IMR-90 (cell line): ENCODE measurements at regions of chr2 and their contacts with region 1.

Region 1: DNA sequence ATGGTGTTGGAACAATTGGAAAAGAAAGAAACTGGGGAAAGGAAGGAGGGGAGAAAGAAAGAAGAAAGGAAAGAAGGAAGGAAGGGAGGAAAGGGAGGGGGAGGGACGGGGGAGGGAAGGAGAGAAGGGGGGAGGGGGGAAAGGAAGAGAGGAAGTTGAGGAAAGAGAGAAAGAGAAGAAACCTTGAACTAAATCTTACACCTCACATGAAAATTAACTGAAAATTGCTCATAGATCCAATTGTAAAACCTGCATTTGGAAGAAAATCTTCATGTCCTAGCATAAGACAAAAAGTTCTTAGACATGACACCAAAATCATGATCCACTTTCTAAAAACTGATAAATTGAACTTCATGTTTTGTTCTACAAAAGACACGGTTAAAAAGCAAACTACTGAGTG is 163.8 kb downstream of the EXOC6B start:
- DNase-seq: no peak
- ATAC-seq: no peak
- H3K4me3 ChIP-seq: no peak overlapping the region
- H3K27ac ChIP-seq: no peak overlapping the region
- H3K4me1 ChIP-seq: 0 out of 2 replicates have a peak, but pooled peaks cover 1% of the 10 kb centered on the region
- H3K27me3 ChIP-seq: no peaks in the 10 kb centered on the region
- CTCF ChIP-seq: no peak
- POLR2A ChIP-seq: no peak
- RAD21 ChIP-seq: no peak

Region 2: DNA sequence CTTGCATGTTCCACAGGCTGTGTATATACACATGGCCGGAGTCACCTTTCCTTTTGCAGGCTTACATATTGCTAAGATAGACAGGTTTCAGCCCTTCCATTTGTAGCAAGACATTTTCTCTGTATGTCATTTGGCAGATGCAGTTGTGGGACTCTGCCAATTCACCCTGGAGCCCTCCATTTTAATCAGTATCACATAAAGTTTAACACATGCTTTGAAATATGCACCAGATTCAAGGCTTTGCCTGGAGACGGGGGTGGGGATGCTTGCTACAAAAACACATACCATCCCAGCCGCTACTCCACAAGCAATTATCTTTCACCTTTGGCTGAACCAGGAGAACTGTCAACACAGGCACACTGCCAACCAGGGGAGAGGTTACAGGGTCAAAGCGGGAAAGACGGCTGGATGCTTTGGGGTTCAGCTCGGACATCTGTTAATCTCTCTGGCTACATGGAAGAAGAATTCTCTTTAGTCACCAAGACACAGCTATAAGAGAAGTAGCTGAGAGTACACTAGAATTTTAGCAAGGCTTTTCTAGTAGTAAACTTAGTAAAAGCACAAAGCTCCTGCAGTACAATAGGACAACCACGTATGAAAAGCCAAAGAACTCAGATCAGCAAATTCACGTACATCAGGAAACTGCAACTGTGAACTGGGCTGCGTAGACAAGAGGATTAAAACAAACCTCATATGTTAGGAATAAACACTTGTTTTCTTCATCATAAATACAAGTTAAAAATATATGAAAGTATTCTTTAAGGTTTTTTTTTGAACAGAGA is 32.9 kb after region 1 on chr2:
- CTCF ChIA-PET with region 1: no interaction called
- POLR2A ChIA-PET with region 1: no interaction called
- dilution Hi-C with region 1: no loop called
- in situ Hi-C with region 1: no loop called
- intact Hi-C with region 1: loop called (anchors 1 kb)
- DNase-seq: peak; percentile 67
- ATAC-seq: peak; percentile 83
- H3K4me3 ChIP-seq: no peak overlapping the region
- H3K27ac ChIP-seq: peak overlapping the region; percentile 24; the same call in 1 of the 2 replicates
- H3K4me1 ChIP-seq: peaks cover 5% of the 10 kb centered on the region
- H3K27me3 ChIP-seq: no peaks in the 10 kb centered on the region
- CTCF ChIP-seq: no peak
- POLR2A ChIP-seq: no peak
- RAD21 ChIP-seq: no peak

Region 3: DNA sequence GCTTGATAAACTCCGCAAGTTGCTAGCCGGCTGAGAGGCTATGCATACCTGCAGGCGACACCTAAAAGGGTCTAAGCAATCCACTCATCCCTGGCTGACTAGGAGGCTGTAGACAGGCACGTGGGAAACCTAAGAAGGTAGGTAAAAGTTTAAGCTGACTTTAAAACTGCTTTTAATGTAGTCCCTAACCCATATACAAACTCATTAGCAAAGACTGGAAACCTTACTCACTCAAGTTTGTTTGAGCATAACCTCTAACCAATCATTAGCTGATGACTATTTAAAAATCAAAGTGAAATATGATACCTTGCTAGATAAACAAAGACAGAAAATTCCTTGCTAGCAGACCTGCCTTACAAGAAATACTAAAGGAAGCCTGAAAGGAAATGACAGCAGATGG is 57.4 kb after region 1 on chr2:
- CTCF ChIA-PET with region 1: no interaction called
- POLR2A ChIA-PET with region 1: no interaction called
- dilution Hi-C with region 1: no loop called
- in situ Hi-C with region 1: no loop called
- intact Hi-C with region 1: no loop called
- DNase-seq: peak; percentile 49
- ATAC-seq: no peak
- H3K4me3 ChIP-seq: no peak overlapping the region
- H3K27ac ChIP-seq: peak overlapping the region; percentile 48; the same call in 1 of the 2 replicates
- H3K4me1 ChIP-seq: peaks cover 11% of the 10 kb centered on the region
- H3K27me3 ChIP-seq: no peaks in the 10 kb centered on the region
- CTCF ChIP-seq: no peak
- POLR2A ChIP-seq: no peak
- RAD21 ChIP-seq: no peak

Region 4: DNA sequence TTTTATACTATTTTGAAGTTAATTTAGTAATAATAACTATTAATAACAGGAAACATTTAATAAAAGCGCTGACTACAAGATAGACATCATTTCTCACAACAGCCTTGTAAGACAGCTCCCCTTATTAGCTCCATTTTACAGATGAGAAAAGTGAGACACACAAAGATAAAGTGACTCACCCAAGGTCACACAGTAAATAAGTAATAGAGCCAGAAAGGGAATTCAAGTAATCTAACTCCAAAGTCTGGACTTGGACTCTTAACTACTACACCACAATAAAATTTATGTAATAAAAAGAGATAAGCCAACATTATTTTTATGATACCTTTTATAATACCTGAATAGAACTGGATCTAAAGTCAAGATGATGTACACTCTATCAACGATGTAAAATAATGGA is 138.5 kb after region 1 on chr2:
- CTCF ChIA-PET with region 1: no interaction called
- POLR2A ChIA-PET with region 1: no interaction called
- dilution Hi-C with region 1: no loop called
- in situ Hi-C with region 1: no loop called
- intact Hi-C with region 1: no loop called
- DNase-seq: no peak
- ATAC-seq: no peak
- H3K4me3 ChIP-seq: no peak overlapping the region
- H3K27ac ChIP-seq: no peak overlapping the region
- H3K4me1 ChIP-seq: no peaks in the 10 kb centered on the region
- H3K27me3 ChIP-seq: no peaks in the 10 kb centered on the region
- CTCF ChIP-seq: no peak
- POLR2A ChIP-seq: no peak
- RAD21 ChIP-seq: no peak

Region 5: GRCh38 chr2:74585406-74586185 is 1923.6 kb after region 1 on chr2:
- CTCF ChIA-PET with region 1: no interaction called
- POLR2A ChIA-PET with region 1: no interaction called
- dilution Hi-C with region 1: no loop called
- in situ Hi-C with region 1: no loop called
- intact Hi-C with region 1: no loop called
- DNase-seq: no peak
- ATAC-seq: no peak
- H3K4me3 ChIP-seq: no peak overlapping the region
- H3K27ac ChIP-seq: no peak overlapping the region
- H3K4me1 ChIP-seq: peaks cover 10% of the 10 kb centered on the region
- H3K27me3 ChIP-seq: peaks cover 3% of the 10 kb centered on the region
- CTCF ChIP-seq: no peak
- POLR2A ChIP-seq: no peak
- RAD21 ChIP-seq: no peak